ENCODE measurements at regions of chrX and their contacts with region 1.

Region 1: DNA sequence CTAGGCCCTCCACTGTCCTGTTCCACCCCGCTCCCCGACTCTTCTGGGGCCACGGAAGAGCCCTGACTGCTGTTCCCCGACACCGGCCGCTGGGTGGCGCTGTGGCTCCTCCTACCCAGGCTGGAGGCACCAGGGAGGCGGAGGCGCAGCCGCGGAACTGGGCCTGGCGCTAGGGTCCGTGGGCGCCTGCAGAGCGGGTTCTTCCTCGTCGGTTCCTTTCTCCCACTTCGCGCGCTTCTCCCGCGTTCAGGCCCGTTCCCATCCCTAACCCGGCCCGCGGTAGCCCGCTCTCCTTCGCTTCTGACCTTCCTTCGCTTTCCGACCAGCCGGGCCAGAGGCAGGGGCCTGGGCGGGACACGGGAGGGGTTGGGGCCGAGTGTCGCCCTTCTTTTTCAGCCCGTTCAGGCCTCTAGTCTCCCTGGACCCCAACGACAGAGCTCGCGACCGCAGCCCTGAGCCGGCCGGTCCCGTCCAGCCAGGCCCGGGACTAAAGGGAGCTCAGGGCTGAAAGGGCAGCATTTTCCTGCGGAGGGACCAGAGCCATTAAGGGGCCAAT is 34.3 kb downstream of the NALF2 start:
- DNase-seq: peak; percentile 66 to 84 (median 75)
- ATAC-seq: peak; percentile 87 to 98 (median 95)
- H3K4me3 ChIP-seq: peak overlapping the region in 11 of 12 donors; percentile 17 to 61 (median 51)
- H3K27ac ChIP-seq: peak overlapping the region in 2 of 12 donors; percentile 38 to 70
- H3K4me1 ChIP-seq: peaks cover 0 to 9% (median 0%) of the 10 kb centered on the region in 12 donors
- H3K27me3 ChIP-seq: peaks cover 0 to 21% (median 0%) of the 10 kb centered on the region in 9 donors
- CTCF ChIP-seq: peak; percentile 64 to 80 (median 73)
- POLR2A ChIP-seq: no peak

Region 2: DNA sequence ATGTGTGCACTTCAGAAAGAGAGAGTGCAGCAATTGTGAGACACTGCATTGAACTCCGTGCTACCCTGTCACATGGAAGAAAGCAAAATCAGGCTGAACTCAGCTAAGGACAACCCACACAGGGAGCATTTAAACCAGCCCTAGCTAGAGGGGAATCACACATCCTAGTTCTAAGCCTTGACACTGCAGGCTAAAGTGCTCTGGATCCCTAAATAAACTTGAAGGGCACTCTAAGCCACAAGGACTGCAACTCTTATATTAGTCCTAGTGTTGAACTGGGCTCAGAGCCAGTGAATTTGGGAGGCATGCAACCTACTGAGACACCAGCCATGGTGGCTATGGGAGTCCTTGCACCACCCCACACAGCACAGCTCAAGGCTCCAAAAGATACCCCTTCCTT is 1417.0 kb before region 1 on chrX:
- intact Hi-C with region 1: no loop called
- DNase-seq: peak in 1 of 5 donors; percentile 21
- ATAC-seq: peak in 3 of 4 donors; percentile 20 to 72 (median 54)
- H3K4me3 ChIP-seq: no peak overlapping the region
- H3K27ac ChIP-seq: no peak overlapping the region
- H3K4me1 ChIP-seq: no peaks in the 10 kb centered on the region
- H3K27me3 ChIP-seq: no peaks in the 10 kb centered on the region
- CTCF ChIP-seq: no peak
- POLR2A ChIP-seq: no peak

Region 3: GRCh38 chrX:69366183-69366582 is 172.2 kb before region 1 on chrX:
- intact Hi-C with region 1: no loop called
- DNase-seq: no peak
- ATAC-seq: no peak
- H3K4me3 ChIP-seq: no peak overlapping the region
- H3K27ac ChIP-seq: no peak overlapping the region
- H3K4me1 ChIP-seq: peaks cover 0 to 12% (median 0%) of the 10 kb centered on the region in 12 donors
- H3K27me3 ChIP-seq: no peaks in the 10 kb centered on the region
- CTCF ChIP-seq: no peak
- POLR2A ChIP-seq: no peak

Region 4: DNA sequence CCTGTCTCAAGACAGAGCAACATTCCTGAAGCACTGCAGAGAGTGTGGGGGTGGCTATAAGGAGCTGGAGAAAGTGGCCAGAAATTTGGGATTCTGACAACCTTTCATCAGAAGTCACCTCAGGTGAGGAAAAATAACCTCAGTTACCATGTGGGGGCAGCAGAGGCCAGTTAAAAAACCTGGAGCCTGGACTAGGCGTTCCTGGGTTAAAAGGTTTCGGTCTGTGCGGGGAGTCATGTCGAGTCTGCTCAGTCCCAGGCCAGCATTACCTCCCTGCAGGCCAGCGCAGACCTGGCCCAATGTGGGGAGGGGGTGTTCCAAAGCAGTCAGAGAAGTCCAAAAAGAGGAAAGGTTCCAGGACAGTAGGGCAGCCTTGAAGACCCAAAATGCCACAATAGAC is 45.2 kb before region 1 on chrX:
- intact Hi-C with region 1: loop called in 1 of 10 experiments (anchors 5 kb)
- DNase-seq: peak in 1 of 5 donors; percentile 26
- ATAC-seq: peak in 3 of 4 donors; percentile 39 to 64 (median 42)
- H3K4me3 ChIP-seq: no peak overlapping the region
- H3K27ac ChIP-seq: no peak overlapping the region
- H3K4me1 ChIP-seq: no peaks in the 10 kb centered on the region
- H3K27me3 ChIP-seq: peaks cover 0 to 34% (median 0%) of the 10 kb centered on the region in 9 donors
- CTCF ChIP-seq: peak in 11 of 12 donors; percentile 11 to 50 (median 46)
- POLR2A ChIP-seq: no peak

Region 5: GRCh38 chrX:69556060-69557011 is 17.9 kb after region 1 on chrX:
- intact Hi-C with region 1: no loop called
- DNase-seq: no peak
- ATAC-seq: peak in 2 of 4 donors; percentile 56 to 65
- H3K4me3 ChIP-seq: no peak overlapping the region
- H3K27ac ChIP-seq: peak overlapping the region in 1 of 12 donors; percentile 14
- H3K4me1 ChIP-seq: no peaks in the 10 kb centered on the region
- H3K27me3 ChIP-seq: peaks cover 0 to 28% (median 0%) of the 10 kb centered on the region in 9 donors
- CTCF ChIP-seq: no peak
- POLR2A ChIP-seq: no peak

Region 6: GRCh38 chrX:69664693-69665092 is 126.3 kb after region 1 on chrX:
- intact Hi-C with region 1: no loop called
- DNase-seq: no peak
- ATAC-seq: peak in 1 of 4 donors; percentile 41
- H3K4me3 ChIP-seq: no peak overlapping the region
- H3K27ac ChIP-seq: no peak overlapping the region
- H3K4me1 ChIP-seq: no peaks in the 10 kb centered on the region
- H3K27me3 ChIP-seq: no peaks in the 10 kb centered on the region
- CTCF ChIP-seq: no peak
- POLR2A ChIP-seq: no peak

Measured in heart left ventricle (tissue), 16 donors.